Panc1 (cell line): ENCODE measurements at regions of chr1 and their contacts with region 1.

Region 1: DNA sequence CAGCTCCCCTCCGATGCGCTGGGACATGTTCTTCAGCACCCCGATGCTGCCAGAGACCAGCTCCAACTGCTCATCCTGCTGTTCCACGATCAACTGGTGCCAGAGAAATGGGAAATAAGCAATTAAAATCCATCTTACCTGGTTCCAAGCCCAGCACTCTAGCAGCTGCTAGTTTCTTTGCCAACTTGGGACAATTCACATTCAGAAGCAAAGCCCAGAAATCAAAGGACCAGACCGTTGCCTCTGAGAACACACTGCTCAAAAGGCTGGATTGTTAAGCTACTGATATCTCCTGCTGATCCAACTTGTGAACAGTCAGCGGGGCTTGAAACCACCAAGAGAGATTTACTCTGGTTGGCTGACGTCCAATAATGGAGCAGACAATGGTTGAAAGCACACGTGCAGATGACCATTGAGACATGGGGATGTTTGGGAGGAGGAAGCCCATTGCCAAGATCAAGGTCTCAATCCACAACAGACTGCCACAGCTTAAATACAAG is 34.4 kb downstream of the STX6 start:
- DNase-seq: no peak
- ATAC-seq: no peak
- H3K4me3 ChIP-seq: no peak overlapping the region
- H3K27ac ChIP-seq: no peak overlapping the region
- H3K4me1 ChIP-seq: no peaks in the 10 kb centered on the region
- H3K27me3 ChIP-seq: no peaks in the 10 kb centered on the region
- CTCF ChIP-seq: no peak

Region 2: GRCh38 chr1:180940445-180940844 is 47.9 kb before region 1 on chr1:
- CTCF ChIA-PET with region 1: interaction called, 14 read pairs
- POLR2A ChIA-PET with region 1: no interaction called
- in situ Hi-C with region 1: no loop called
- intact Hi-C with region 1: no loop called
- DNase-seq: no peak
- ATAC-seq: no peak
- H3K4me3 ChIP-seq: no peak overlapping the region
- H3K27ac ChIP-seq: no peak overlapping the region
- H3K4me1 ChIP-seq: no peaks in the 10 kb centered on the region
- H3K27me3 ChIP-seq: no peaks in the 10 kb centered on the region
- CTCF ChIP-seq: no peak

Region 3: GRCh38 chr1:180973369-180973768 is 14.9 kb before region 1 on chr1:
- CTCF ChIA-PET with region 1: no interaction called
- POLR2A ChIA-PET with region 1: no interaction called
- in situ Hi-C with region 1: no loop called
- intact Hi-C with region 1: no loop called
- DNase-seq: no peak
- ATAC-seq: no peak
- H3K4me3 ChIP-seq: no peak overlapping the region
- H3K27ac ChIP-seq: no peak overlapping the region
- H3K4me1 ChIP-seq: no peaks in the 10 kb centered on the region
- H3K27me3 ChIP-seq: no peaks in the 10 kb centered on the region
- CTCF ChIP-seq: no peak

Region 4: GRCh38 chr1:181002582-181003172 is 14.4 kb after region 1 on chr1:
- CTCF ChIA-PET with region 1: no interaction called
- POLR2A ChIA-PET with region 1: no interaction called
- in situ Hi-C with region 1: no loop called
- intact Hi-C with region 1: no loop called
- DNase-seq: no peak
- ATAC-seq: no peak
- H3K4me3 ChIP-seq: no peak overlapping the region
- H3K27ac ChIP-seq: no peak overlapping the region
- H3K4me1 ChIP-seq: no peaks in the 10 kb centered on the region
- H3K27me3 ChIP-seq: no peaks in the 10 kb centered on the region
- CTCF ChIP-seq: no peak

Region 5: GRCh38 chr1:181251001-181251712 is 262.9 kb after region 1 on chr1:
- CTCF ChIA-PET with region 1: no interaction called
- POLR2A ChIA-PET with region 1: no interaction called
- in situ Hi-C with region 1: no loop called
- intact Hi-C with region 1: no loop called
- DNase-seq: no peak
- ATAC-seq: no peak
- H3K4me3 ChIP-seq: no peak overlapping the region
- H3K27ac ChIP-seq: no peak overlapping the region
- H3K4me1 ChIP-seq: no peaks in the 10 kb centered on the region
- H3K27me3 ChIP-seq: no peaks in the 10 kb centered on the region
- CTCF ChIP-seq: no peak

Region 6: GRCh38 chr1:182855911-182856310 is 1867.6 kb after region 1 on chr1:
- CTCF ChIA-PET with region 1: no interaction called
- POLR2A ChIA-PET with region 1: interaction called, 10 read pairs
- in situ Hi-C with region 1: no loop called
- intact Hi-C with region 1: no loop called
- DNase-seq: no peak
- ATAC-seq: no peak
- H3K4me3 ChIP-seq: no peak overlapping the region
- H3K27ac ChIP-seq: no peak overlapping the region
- H3K4me1 ChIP-seq: no peaks in the 10 kb centered on the region
- H3K27me3 ChIP-seq: no peaks in the 10 kb centered on the region
- CTCF ChIP-seq: no peak